ENCODE measurements at regions of chr1 and their contacts with region 1.

Region 1: DNA sequence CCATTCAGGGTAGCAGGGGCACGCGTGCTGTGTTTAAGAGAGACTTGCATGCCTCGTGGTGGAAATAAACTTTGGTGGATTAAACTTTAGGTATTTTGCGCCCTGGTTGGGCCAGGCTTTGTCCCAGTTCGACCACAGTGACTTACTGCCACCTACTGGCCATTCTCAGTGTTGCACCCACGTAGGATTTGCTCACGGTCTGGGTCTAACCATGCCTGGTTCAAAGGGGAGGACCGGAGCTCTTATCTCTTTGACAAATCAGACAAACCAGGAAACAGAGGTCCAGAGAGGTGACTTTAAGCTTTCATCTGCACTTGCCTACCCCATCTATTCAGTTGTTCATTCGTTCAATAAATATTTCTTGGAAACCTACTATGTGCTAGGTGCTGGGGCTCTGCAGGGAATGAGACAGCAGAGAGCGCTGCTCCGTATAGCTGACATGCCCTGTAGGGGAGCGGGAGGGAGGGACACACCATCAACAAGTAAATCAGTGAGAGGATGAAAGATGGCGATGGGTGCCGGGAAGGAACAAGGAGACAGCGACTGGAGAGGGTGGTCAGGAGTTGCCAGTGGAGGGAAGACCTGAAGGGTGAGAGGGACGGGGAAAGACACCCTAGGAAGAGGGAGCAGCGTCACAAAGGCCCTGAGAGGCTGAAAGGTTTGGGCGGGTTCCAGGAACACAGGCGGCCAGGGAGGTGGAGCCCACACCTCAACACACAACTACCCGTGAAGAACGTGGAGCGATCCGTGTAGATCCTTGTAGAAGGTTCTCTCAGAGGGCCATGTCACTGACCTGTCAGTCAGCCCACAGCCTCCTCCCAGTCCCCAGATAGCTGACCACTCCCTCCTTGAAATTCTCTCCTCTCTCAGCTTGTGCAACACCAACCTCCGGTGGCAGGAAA is 27.2 kb upstream of the TINAGL1 start:
- DNase-seq: peak; percentile 82 to 92
- ATAC-seq: peak; percentile 97 to 99 (median 98)
- H3K4me3 ChIP-seq: no peak overlapping the region
- H3K4me3 Mint-ChIP-seq: no peak overlapping the region
- H3K27ac ChIP-seq: no peak overlapping the region
- H3K27ac Mint-ChIP-seq: no peak overlapping the region
- H3K4me1 ChIP-seq: peaks cover 10% of the 10 kb centered on the region
- H3K4me1 Mint-ChIP-seq: peaks cover 5% of the 10 kb centered on the region in 2 donors
- H3K27me3 ChIP-seq: no peaks in the 10 kb centered on the region
- H3K27me3 Mint-ChIP-seq: peaks cover 4 to 14% of the 10 kb centered on the region in 2 donors
- CTCF ChIP-seq: peak; percentile 91

Region 2: DNA sequence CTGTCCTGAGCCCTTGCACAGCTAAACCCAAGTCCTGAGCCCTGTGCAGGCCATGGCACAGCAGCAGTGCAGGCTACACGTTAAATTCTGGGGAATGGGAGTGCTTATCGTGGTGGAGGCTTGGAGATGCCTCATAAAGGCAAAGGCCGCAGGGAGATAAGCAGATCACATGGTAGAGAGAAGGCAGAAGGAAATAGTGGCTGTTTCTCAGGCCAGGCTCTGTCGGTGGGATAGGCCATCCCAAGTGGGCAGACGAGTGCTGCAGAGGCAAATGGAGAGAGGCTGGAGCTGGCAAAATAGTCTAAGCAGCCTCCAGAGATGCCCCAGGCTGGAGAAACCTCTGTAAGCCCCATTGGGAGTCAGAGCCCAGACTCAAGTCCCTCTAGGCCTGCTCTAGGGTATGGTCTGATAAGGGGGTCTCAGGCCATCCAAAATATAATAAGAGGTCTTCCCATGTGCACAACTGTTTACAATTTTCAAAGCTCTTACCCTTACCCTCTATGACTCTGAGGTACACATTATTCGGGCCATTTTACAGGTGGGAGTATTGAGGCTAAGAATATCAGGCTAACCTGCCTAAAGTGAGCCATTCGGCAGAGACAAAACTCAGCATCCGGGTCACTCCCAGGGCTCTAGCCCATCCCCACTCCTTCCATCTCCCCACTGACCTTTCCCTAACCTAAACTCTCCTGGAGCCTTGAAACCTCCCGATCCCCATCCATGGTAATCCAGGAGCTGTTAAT is 389.1 kb before region 1 on chr1:
- intact Hi-C with region 1: loop called (anchors 5 kb)
- DNase-seq: no peak
- ATAC-seq: no peak
- H3K4me3 ChIP-seq: no peak overlapping the region
- H3K4me3 Mint-ChIP-seq: no peak overlapping the region
- H3K27ac ChIP-seq: no peak overlapping the region
- H3K27ac Mint-ChIP-seq: no peak overlapping the region
- H3K4me1 ChIP-seq: peaks cover 11% of the 10 kb centered on the region
- H3K4me1 Mint-ChIP-seq: peaks cover 6 to 8% of the 10 kb centered on the region in 2 donors
- H3K27me3 ChIP-seq: no peaks in the 10 kb centered on the region
- H3K27me3 Mint-ChIP-seq: peaks cover 0 to 4% of the 10 kb centered on the region in 2 donors
- CTCF ChIP-seq: no peak

Region 3: GRCh38 chr1:31181515-31182343 is 367.4 kb before region 1 on chr1:
- intact Hi-C with region 1: loop called (anchors 2 kb)
- DNase-seq: peak; percentile 49 to 50
- ATAC-seq: peak; percentile 46 to 77 (median 74)
- H3K4me3 ChIP-seq: no peak overlapping the region
- H3K4me3 Mint-ChIP-seq: peak overlapping the region; percentile 42
- H3K27ac ChIP-seq: no peak overlapping the region
- H3K27ac Mint-ChIP-seq: no peak overlapping the region
- H3K4me1 ChIP-seq: peaks cover 11% of the 10 kb centered on the region
- H3K4me1 Mint-ChIP-seq: peaks cover 0 to 9% of the 10 kb centered on the region in 2 donors
- H3K27me3 ChIP-seq: peaks cover 5% of the 10 kb centered on the region
- H3K27me3 Mint-ChIP-seq: peaks cover 23 to 29% of the 10 kb centered on the region in 2 donors
- CTCF ChIP-seq: peak; percentile 68

Region 4: GRCh38 chr1:31394628-31395193 is 154.4 kb before region 1 on chr1:
- intact Hi-C with region 1: loop called (anchors 1 kb)
- DNase-seq: peak; percentile 76 to 84
- ATAC-seq: peak; percentile 89 to 97 (median 96)
- H3K4me3 ChIP-seq: peak overlapping the region; percentile 45
- H3K4me3 Mint-ChIP-seq: peak overlapping the region; percentile 90
- H3K27ac ChIP-seq: no peak overlapping the region
- H3K27ac Mint-ChIP-seq: peak overlapping the region; percentile 53 to 65
- H3K4me1 ChIP-seq: peaks cover 9% of the 10 kb centered on the region
- H3K4me1 Mint-ChIP-seq: peaks cover 14 to 18% of the 10 kb centered on the region in 2 donors
- H3K27me3 ChIP-seq: no peaks in the 10 kb centered on the region
- H3K27me3 Mint-ChIP-seq: peaks cover 0 to 2% of the 10 kb centered on the region in 2 donors
- CTCF ChIP-seq: peak; percentile 88

Measured in natural killer cell (primary cell).